Right ventricle myocardium inferior (tissue), 1 donor: ENCODE measurements at regions of chr2 and their contacts with region 1.

Region 1: DNA sequence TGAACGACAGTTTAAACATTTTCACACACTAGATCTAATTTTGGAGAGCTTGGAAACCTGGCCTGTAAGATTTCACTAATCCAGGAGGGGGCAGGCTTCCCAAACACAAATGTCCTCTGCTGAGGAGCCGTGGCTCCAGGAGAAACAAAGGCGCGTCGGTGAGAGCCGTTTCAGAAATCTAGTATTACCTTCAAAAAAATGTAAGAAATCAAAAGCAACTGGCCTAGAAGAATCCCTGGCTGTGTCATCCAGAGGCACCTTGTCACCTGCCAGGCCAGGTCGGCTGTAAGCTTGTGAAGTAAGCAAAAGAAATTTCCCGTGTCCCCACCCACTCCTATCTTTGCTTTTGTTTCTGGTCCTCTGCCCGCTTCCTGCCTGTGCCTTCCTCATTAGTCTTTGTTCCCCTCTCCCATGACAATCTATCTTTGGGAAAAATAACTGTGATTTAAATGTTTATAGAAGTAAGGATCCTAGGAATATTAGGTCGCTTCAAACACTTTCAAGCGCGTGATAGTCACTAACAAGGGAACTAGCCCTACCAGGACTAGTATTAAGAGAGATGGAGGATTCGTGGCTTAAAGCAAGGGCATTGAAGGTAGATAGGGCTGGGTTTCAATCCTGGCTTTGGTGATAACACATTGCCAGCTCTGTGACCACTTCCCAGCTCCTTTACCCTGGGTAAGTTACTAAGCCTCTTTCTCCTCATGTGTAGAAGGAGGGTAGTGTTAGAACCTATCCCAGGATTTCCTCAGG is 99.5 kb upstream of the STK39 start:
- DNase-seq: peak; percentile 64
- ATAC-seq: peak; percentile 82

Region 2: DNA sequence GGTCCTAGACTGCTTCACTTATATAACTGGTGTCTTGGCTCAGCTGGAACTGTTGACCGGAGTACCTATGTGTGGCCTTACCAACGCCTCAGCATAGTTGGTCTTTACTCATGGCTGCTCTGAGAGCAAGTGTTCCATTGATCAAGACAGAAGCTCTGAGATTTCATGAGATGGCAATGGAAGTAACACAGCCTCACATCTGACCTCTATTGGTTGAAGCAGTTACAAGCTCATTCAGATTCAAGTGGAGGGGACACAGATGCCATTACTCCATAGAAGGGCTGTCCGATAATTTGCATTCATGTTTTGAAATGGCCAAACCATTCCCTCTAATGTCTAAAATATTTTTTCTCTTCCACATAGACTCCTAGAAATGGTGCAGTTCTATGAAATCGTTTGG is 53.1 kb before region 1 on chr2:
- intact Hi-C with region 1: no loop called
- DNase-seq: no peak
- ATAC-seq: no peak

Region 3: DNA sequence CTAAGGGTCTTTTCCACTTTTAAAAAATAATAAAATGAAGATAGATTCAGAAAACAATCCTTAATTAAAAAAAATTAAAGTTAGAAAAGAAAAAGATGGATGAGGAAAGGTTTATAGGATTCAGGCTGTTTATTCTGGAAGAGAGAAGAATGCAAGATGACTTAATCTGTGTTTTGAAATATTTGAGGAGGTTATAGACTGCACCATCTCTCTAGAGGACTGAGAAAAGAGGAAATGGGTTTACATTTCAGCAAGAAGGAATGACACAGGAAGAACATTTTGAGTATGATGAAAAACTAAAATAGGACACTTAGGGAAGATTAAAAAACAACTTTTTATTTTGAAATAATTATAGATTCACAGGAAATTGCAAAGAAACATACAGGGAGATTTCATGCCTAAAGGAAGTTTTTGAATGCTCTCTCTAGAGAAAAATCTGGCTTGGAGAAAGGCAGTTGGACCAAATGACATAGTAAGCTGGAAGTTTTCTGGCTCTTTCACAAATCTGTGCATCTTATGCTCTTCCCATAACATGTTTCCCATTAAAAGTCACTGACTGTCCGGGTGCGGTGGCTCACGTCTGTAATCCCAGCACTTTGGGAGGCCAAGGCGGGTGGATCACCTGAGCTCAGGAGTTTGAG is 184.2 kb after region 1 on chr2:
- intact Hi-C with region 1: loop called (anchors 5 kb)
- DNase-seq: no peak
- ATAC-seq: no peak

Region 4: GRCh38 chr2:168687314-168687713 is 340.4 kb after region 1 on chr2:
- intact Hi-C with region 1: loop called (anchors 1 kb)
- DNase-seq: no peak
- ATAC-seq: no peak

Region 5: DNA sequence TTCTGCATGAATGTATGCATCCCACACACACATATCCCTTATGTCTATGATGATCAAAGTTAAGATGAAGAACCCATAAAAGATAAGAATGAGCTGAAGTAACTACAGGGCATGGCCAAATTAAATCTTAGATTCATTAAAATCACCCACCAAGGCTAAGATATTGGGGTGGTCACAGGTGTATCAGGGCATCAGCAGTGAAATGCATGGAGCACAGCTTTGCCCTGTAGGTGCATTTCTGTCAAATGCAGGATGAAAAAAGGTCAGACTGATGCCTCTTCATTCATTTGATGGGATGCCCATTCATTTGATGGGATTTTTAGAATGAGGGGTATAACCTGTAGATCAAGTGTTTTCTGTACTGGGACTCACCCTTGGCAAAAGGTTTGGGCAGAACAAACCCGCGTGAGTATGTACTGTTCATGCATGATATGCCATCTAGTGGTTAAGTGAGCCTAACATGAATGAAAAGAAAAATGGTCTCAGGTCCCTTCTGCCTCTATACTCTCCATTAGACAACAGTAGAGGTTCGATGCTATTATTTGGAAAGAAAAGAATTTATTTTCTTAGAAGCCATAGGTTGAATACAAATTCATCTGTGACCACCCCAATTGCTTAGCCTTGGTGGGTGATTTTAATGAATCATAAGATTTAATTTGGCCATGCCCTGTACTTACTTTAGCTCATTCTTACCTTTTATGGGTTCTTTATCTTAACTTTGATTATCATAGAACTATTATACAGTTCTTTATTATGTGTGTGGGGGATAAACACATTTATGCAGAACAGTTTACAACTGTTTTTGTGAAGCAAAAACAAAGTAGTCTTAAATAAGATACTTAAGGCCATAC is 412.3 kb after region 1 on chr2:
- intact Hi-C with region 1: loop called (anchors 1 kb)
- DNase-seq: no peak
- ATAC-seq: peak; percentile 58

Region 6: DNA sequence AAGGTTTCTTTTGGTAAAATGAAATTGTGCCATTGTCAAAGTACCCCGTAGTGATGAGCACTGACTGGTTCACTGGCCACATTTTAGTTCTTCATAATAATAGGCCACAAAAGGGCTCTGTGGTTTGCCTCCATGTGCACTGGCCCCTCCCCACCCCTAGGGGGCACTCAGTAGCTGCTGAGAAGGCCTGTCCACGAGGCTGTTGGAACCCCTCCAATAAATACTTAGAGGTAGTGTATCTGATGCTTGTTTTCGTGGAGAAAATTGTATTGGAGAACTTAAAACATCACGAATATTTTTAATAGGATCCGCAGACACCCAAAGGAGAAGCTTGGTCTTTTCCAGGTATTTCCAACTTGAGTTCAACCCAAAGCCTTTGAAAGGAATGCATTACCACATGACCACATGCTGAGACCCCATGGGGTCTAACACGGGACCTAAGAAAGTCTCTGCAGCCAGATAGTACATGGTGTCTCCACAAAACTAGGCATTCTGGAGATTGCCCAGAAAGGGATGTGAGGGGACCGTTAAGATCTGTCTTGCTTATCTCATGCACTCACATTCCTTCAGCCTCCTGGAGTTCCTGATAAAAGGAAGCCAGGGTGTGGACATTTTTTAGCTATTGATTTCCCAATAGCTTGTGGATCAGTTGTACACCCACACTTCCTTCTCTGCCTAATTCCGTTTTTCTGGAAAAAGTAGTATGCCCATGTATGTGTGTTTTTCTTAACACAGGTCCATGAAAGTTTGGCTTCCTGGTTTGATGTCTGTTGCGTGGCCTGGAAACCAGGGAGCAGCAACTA is 427.0 kb after region 1 on chr2:
- intact Hi-C with region 1: loop called (anchors 5 kb)
- DNase-seq: no peak
- ATAC-seq: peak; percentile 50

Region 7: DNA sequence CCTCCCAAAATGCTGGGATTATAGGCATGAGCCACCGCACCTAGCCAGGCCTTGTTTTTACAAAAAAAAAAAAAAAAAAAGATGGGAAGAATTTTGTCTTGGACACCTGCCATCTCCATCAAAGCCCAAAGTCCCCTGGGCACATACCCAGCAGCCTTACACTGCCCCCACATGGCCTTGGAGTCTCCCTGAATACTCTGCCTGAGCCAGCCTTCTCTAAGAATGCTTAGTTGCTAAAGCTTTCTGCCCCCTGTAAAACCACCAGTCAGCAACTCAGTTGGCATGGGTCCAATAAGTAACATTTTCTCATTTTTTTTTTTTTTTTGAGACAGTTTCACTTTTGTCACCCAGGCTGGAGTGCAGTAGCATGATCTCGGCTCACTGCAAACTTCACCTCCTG is 502.7 kb after region 1 on chr2:
- intact Hi-C with region 1: loop called (anchors 5 kb)
- DNase-seq: no peak
- ATAC-seq: no peak

Region 8: GRCh38 chr2:168920504-168921157 is 573.7 kb after region 1 on chr2:
- intact Hi-C with region 1: loop called (anchors 1 kb)
- DNase-seq: no peak
- ATAC-seq: no peak